Naive thymus-derived CD4-positive, alpha-beta T cell (primary cell): ENCODE measurements at regions of chr3 and their contacts with region 1.

Region 1: DNA sequence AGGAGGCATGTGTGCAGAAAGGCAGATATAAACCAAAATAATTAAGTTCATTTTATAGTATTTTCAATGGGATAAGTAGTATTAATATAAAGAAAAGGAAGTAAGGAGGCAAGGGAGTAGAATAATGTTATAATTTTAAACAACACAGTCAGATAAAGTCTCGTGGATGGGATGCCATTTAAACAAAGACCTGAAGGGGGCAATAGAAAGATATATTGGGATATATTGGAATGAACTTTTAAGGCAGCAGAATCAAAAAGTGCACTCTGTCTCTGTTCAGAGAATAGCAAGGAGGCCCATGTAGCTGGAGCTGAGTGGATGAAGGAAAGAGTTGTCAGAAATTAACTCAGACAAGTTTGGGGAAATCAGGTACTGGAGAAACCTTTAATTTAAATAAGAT is 158.7 kb downstream of the CGGBP1 start:
- DNase-seq: peak in 1 of 9 donors; percentile 5
- ATAC-seq: no peak
- H3K4me3 ChIP-seq: no peak overlapping the region
- H3K4me3 Mint-ChIP-seq: no peak overlapping the region
- H3K27ac ChIP-seq: no peak overlapping the region
- H3K27ac Mint-ChIP-seq: no peak overlapping the region
- H3K4me1 ChIP-seq: no peaks in the 10 kb centered on the region
- H3K4me1 Mint-ChIP-seq: no peaks in the 10 kb centered on the region
- H3K27me3 ChIP-seq: no peaks in the 10 kb centered on the region
- H3K27me3 Mint-ChIP-seq: peaks cover 0 to 4% (median 0%) of the 10 kb centered on the region in 5 donors

Region 2: DNA sequence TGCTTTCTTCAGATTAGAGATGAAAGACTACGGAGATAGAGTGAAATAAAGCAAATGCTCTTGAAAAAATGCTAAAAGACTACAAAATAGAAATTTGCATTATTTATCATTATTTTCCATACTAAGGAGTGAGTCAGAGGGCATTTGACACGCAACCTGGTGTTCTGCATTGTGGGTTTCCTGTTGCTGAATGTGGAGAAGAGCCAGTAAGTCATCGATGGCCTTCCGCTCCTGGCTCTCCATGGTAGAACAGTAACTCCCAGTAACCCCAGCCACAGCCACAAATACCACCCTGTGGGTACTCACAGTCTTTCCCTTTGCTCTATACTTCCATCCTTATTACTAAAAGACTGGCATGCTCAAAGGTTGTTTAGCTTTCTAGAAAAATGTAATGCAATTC is 97.2 kb after region 1 on chr3:
- CTCF ChIA-PET with region 1: no interaction called
- POLR2A ChIA-PET with region 1: no interaction called
- intact Hi-C with region 1: loop called (anchors 5 kb)
- DNase-seq: peak in 1 of 9 donors; percentile 57
- ATAC-seq: peak; percentile 84
- H3K4me3 ChIP-seq: no peak overlapping the region
- H3K4me3 Mint-ChIP-seq: peak overlapping the region in 9 of 10 donors; percentile 2 to 70 (median 59)
- H3K27ac ChIP-seq: no peak overlapping the region
- H3K27ac Mint-ChIP-seq: peak overlapping the region in 3 of 9 donors; percentile 26 to 59 (median 59)
- H3K4me1 ChIP-seq: peaks cover 0 to 7% of the 10 kb centered on the region in 2 donors
- H3K4me1 Mint-ChIP-seq: peaks cover 4 to 24% (median 15%) of the 10 kb centered on the region in 7 donors
- H3K27me3 ChIP-seq: no peaks in the 10 kb centered on the region
- H3K27me3 Mint-ChIP-seq: peaks cover 0 to 14% (median 4%) of the 10 kb centered on the region in 5 donors